GM10248 (cell line): ENCODE measurements at regions of chr9 and their contacts with region 1.

Region 1: DNA sequence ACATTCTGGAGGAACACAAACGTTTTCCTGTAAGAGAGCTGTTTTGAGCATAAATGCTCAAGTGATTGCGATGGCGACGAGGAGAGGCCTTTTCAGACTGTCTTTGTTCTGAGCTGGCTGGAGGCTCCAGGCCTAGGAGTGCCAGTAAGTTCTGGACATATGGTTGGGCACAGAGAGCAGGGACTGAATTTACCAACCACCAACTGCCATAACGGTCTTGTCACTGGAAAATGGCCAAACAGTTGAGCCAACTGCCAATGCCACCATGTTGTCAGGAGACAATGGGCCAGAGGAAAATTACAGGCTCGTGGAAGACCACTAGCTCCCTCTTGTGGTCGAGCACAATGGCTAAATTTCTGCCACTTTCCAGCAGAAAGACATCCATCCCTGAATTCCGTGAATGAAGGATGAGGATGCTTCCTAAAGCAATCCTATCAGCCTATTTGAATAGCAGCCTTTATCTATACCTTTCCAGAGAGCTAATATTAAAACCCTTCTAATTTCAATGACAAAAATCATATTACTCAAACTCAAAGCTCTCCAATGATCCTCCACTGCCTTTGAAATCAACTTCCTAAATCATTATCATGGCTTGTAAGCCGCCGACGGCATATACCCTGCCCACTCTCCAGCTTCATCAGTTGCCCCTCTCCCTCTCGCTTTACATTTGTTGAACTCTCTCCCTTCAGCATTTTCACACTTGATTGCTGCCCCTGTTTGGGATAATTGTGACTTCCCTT is 66.9 kb upstream of the GLIS3 start:
- DNase-seq: peak; percentile 34
- CTCF ChIP-seq: peak; percentile 64

Region 2: DNA sequence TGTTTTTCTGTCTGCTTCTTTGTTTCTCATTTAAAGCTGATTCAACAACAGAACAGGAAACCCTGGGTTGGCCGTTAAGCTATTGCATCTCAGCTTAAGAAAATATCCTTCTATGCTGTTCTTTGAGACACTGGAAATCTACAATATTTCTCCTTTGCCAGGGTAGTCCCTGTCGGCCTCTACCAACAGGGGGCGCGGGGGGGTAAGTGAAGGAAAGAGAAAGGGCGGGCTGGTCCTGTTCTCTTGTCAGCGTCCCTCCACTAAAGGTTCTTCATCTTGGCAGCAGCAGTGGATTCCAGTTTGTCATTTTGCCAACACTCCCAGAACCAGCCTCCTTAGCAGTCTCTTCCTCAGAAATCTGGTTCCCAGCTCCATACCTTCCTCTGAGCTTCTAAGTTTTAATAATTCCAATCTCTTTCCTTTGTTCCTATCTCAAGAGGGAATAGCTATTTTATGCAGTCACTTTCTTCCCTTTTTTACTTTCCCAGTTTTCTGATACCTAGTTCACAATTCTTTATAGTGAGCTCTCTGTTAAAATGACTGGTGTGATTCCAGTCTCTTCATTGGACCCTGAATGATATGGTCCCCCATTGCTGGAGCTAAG is 289.2 kb before region 1 on chr9:
- CTCF ChIA-PET with region 1: interaction called, 11 read pairs
- POLR2A ChIA-PET with region 1: no interaction called
- DNase-seq: peak; percentile 42
- CTCF ChIP-seq: peak; percentile 72

Region 3: DNA sequence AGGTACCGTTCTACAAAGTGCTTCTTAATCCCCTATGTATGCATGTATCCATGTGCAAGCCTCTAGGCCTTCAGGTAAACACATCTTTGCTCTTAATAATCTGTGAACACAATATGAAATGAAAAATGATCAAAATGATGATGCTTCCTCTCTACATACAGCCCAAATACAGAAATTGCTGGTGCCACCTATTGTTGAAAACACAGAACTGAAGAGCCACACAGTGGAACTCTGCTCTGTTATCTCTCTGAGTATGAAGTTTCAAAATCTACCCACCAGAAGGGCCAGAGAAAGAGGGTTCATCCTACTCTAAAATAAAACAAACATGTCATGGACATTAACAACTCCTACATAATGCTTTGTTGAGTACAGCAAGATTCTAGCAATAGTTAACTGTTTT is 138.2 kb before region 1 on chr9:
- CTCF ChIA-PET with region 1: no interaction called
- POLR2A ChIA-PET with region 1: no interaction called
- DNase-seq: no peak
- CTCF ChIP-seq: peak; percentile 36

Region 4: DNA sequence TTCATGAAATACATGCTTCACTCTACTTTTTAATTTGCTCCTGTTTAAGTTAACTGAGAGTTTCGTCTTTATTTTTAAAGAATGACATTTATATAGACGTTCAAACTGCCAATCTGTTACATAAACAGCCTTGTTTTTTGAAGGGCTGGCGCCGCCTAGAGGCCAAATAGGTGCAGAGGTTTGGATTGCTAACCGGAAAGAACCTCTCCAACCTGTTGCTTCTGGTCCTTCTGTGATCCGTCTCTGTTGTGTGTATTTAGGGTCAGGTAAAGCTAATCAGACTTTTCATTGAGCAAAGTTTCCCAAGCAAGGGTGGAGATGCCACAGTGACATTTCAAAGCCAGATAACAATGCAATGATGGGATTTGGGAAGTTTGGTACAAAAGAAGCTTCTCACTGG is 27.4 kb before region 1 on chr9:
- CTCF ChIA-PET with region 1: interaction called, 26 read pairs
- POLR2A ChIA-PET with region 1: no interaction called
- DNase-seq: peak; percentile 75
- CTCF ChIP-seq: peak; percentile 91

Region 5: DNA sequence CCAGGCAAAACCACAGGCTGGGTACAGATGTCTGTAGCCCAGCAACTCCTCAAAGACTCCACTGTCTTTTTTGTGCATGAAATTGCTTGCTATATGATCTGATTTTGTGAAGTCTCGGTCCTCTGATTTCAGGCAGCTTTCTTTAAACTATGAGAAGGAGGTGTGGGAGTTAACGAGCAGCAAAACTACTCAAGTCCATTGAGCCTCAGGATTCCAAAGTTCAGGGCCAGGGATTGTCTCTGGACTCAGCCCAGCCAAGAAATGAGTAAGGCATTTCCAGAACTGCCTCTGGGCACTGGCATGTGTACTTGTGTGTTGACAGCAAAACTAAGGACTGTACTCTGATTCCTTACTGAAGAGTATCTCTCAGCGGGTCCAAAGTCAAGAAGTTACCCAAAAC is 13.5 kb before region 1 on chr9:
- CTCF ChIA-PET with region 1: interaction called, 23 read pairs
- POLR2A ChIA-PET with region 1: no interaction called
- DNase-seq: no peak
- CTCF ChIP-seq: no peak